IMR-90 (cell line): ENCODE measurements at regions of chr4 and their contacts with region 1.

Region 1: DNA sequence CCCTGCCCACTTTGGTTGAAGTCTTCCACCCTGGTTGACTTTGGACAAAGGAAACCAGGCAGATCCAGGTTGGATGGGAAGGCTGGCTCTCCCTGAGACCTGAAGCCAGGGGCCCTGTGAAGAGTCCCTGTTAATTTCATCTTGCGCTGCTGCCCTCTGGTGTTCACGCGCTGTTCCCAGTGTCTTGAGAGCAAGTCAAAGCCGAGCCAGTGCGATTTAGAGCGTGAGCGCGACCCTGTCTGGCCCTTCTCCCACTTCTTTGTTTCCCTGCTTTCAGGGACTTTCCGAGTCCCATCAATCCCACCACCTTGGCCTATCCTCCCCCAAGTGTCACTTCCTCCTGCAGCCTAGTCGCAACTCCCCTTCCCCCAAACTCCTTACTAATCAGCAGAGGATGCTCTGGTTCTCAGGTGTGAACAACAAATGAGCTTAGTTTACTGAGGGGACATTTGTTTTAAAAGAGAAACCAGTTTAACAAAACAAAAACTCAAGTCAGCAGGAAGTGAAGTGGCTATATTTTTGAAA is 25.8 kb upstream of the CHRNA9 start:
- DNase-seq: peak; percentile 77
- ATAC-seq: peak; percentile 99
- H3K4me3 ChIP-seq: no peak overlapping the region
- H3K27ac ChIP-seq: no peak overlapping the region
- H3K4me1 ChIP-seq: no peaks in the 10 kb centered on the region
- H3K27me3 ChIP-seq: peaks cover 10% of the 10 kb centered on the region
- CTCF ChIP-seq: peak; percentile 88
- POLR2A ChIP-seq: no peak
- RAD21 ChIP-seq: peak; percentile 83

Region 2: DNA sequence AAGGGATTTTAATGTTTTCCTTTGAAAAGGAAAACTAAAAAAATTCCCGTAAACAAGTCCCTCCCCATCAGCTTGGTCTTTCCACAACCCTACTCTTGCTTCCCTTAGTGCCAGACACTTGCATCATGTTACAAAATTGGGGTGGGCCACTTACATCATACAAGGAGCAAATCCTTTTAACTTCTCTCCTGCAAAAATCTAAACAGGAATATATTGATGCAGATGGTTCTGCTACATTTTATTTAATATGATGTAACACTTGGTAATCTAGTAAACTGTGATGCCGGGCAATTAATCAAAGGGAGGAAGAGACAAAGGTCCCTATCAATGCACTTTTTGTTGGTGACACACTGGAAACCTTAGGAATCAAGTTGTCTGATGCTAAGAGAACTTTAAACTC is 486.1 kb before region 1 on chr4:
- CTCF ChIA-PET with region 1: no interaction called
- POLR2A ChIA-PET with region 1: no interaction called
- dilution Hi-C with region 1: no loop called
- in situ Hi-C with region 1: no loop called
- intact Hi-C with region 1: no loop called
- DNase-seq: peak; percentile 74
- ATAC-seq: peak; percentile 48; the same call in 1 of the 2 replicates
- H3K4me3 ChIP-seq: no peak overlapping the region
- H3K27ac ChIP-seq: no peak overlapping the region; the same call in 1 of the 2 replicates
- H3K4me1 ChIP-seq: 0 out of 2 replicates have a peak, but pooled peaks cover 2% of the 10 kb centered on the region
- H3K27me3 ChIP-seq: no peaks in the 10 kb centered on the region
- CTCF ChIP-seq: no peak
- POLR2A ChIP-seq: no peak
- RAD21 ChIP-seq: no peak

Region 3: DNA sequence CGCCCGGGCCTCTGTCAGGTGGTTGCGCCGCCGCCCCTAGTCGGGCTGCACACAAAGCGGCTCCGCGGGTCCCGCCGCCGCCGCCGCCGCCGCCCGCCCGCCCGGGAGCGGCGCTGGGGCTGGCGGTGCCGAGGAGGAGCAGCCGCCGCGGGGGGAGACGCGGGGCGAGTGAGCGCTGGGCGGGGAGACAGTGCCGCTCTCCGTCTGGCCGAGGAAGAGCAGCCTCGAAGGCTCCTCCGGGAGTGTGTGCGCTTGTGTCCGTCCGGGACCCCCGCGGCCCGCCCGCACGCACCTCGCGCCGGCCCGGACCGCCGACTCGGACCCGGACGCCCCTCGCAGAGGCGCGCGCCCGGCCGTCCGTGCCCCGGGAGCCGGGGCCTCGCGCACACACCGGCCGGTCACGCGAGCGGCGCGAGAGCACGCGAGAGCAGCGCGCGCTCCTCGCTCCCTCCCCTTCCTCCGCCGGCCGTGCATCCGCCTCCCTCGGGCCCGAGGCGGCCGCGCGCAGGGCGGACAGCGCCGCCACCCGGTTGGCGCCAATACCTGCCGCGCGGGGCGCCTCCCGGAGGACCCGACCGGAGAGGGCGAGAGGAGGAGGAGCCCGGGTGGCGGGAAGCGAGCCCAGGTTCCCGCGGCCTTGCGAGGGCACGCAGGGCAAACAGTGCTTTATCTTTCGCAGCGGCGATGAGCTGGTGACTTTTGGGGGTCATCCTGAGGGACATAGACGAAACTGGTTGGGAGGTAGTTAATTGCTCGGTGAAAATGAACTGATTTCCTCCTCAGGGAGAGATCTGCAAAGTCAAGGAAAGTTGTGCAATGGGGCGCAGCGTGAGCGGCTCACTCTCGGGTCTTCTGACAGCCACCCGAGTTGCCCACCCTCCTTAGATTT is 331.6 kb before region 1 on chr4 and contains the start of gene PDS5A:
- CTCF ChIA-PET with region 1: no interaction called
- POLR2A ChIA-PET with region 1: no interaction called
- dilution Hi-C with region 1: no loop called
- in situ Hi-C with region 1: no loop called
- intact Hi-C with region 1: loop called (anchors 1 kb)
- DNase-seq: peak; percentile 84
- ATAC-seq: peak; percentile 89
- H3K4me3 ChIP-seq: peak within 1 kb of the TSS; percentile 96
- H3K27ac ChIP-seq: peak within 1 kb of the TSS; percentile 91
- H3K4me1 ChIP-seq: peaks cover 2% of the 10 kb centered on the region
- H3K27me3 ChIP-seq: no peaks in the 10 kb centered on the region
- CTCF ChIP-seq: peak; percentile 99
- POLR2A ChIP-seq: peak; percentile 62
- RAD21 ChIP-seq: peak; percentile 71
- total RNA-seq, gene PDS5A: 33.5 and 53.0 TPM in 2 replicates

Region 4: GRCh38 chr4:40377582-40378550 is 68.6 kb after region 1 on chr4:
- CTCF ChIA-PET with region 1: no interaction called
- POLR2A ChIA-PET with region 1: no interaction called
- dilution Hi-C with region 1: no loop called
- in situ Hi-C with region 1: no loop called
- intact Hi-C with region 1: no loop called
- DNase-seq: peak; percentile 27
- ATAC-seq: peak; percentile 64
- H3K4me3 ChIP-seq: no peak overlapping the region
- H3K27ac ChIP-seq: no peak overlapping the region
- H3K4me1 ChIP-seq: no peaks in the 10 kb centered on the region
- H3K27me3 ChIP-seq: peaks cover 4% of the 10 kb centered on the region
- CTCF ChIP-seq: no peak
- POLR2A ChIP-seq: no peak
- RAD21 ChIP-seq: no peak

Region 5: DNA sequence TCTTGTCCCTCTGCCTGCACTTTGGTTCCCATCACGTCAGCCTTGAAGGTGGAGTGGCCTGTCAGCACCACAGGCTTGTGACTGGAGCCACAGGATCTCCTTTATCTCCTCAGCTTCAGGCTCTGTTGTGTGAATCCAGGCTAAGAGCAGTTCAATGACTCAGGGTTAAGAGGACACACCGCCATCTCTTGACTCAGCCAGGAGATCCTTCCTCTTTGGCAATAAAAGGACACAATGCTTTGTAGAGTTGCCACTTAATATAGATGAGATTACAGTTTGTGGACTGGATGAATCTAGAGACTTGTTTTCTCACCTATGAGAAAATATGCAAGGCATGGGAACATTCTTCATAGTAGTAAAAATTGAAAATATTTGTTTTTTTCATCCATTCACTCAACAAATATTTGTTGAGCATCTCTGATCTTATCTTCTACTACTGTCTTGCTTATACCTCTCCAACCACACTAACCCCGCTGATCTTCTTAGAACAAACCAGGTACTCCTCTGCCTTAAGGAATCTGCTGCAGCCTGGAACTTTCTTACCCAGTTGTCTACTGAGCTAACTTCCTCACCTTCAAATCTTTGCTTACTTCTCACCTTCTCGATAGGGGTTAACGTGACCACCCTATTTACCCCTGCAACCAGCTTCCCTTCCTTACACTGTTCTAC is 1009.7 kb after region 1 on chr4:
- CTCF ChIA-PET with region 1: no interaction called
- POLR2A ChIA-PET with region 1: no interaction called
- dilution Hi-C with region 1: no loop called
- in situ Hi-C with region 1: no loop called
- intact Hi-C with region 1: no loop called
- DNase-seq: no peak
- ATAC-seq: no peak
- H3K4me3 ChIP-seq: no peak overlapping the region
- H3K27ac ChIP-seq: no peak overlapping the region
- H3K4me1 ChIP-seq: no peaks in the 10 kb centered on the region
- H3K27me3 ChIP-seq: peaks cover 6% of the 10 kb centered on the region; the same call in 1 of the 2 replicates
- CTCF ChIP-seq: no peak
- POLR2A ChIP-seq: no peak
- RAD21 ChIP-seq: no peak